ENCODE measurements at regions of chr1 and their contacts with region 1.

Region 1: GRCh38 chr1:243850452-243851256 is 611 bp upstream of the AKT3 start:
- DNase-seq: peak; percentile 92
- ATAC-seq: peak; percentile 50
- H3K4me3 Mint-ChIP-seq: peak overlapping the region; percentile 70
- H3K27ac Mint-ChIP-seq: peak overlapping the region; percentile 92
- H3K4me1 Mint-ChIP-seq: peaks cover 33% of the 10 kb centered on the region
- H3K27me3 Mint-ChIP-seq: peaks cover 2% of the 10 kb centered on the region

Region 2: GRCh38 chr1:243421784-243422183 is 428.9 kb before region 1 on chr1:
- CTCF ChIA-PET with region 1: no interaction called
- POLR2A ChIA-PET with region 1: no interaction called
- intact Hi-C with region 1: loop called in 1 of 2 experiments (anchors 2 kb)
- DNase-seq: peak; percentile 78
- ATAC-seq: peak; percentile 99
- H3K4me3 Mint-ChIP-seq: peak overlapping the region; percentile 34
- H3K27ac Mint-ChIP-seq: peak overlapping the region; percentile 38
- H3K4me1 Mint-ChIP-seq: peaks cover 26% of the 10 kb centered on the region
- H3K27me3 Mint-ChIP-seq: no peaks in the 10 kb centered on the region

Region 3: DNA sequence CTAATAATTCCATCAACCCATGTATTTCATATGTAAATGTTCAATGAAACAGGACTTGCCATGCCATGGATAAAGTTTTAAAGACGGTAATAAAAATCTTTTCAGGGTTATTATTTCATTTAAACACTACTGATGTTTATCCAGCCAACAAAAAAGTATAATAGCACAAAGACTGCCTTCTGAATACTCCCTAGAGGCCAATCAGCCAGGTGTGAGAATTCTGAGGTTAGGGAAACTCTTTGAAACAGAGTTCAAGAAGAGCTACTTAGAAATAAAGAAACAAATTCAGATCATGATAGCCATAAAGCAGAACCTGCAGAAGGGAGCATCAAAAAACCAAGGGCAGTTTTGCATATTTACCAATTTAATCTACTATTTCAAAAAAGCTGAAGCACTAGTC is 49.3 kb before region 1 on chr1:
- CTCF ChIA-PET with region 1: no interaction called
- POLR2A ChIA-PET with region 1: interaction called, 3 read pairs
- intact Hi-C with region 1: loop called (anchors 1 kb)
- DNase-seq: no peak
- ATAC-seq: no peak
- H3K4me3 Mint-ChIP-seq: no peak overlapping the region
- H3K27ac Mint-ChIP-seq: no peak overlapping the region
- H3K4me1 Mint-ChIP-seq: peaks cover 50% of the 10 kb centered on the region
- H3K27me3 Mint-ChIP-seq: no peaks in the 10 kb centered on the region

Region 4: DNA sequence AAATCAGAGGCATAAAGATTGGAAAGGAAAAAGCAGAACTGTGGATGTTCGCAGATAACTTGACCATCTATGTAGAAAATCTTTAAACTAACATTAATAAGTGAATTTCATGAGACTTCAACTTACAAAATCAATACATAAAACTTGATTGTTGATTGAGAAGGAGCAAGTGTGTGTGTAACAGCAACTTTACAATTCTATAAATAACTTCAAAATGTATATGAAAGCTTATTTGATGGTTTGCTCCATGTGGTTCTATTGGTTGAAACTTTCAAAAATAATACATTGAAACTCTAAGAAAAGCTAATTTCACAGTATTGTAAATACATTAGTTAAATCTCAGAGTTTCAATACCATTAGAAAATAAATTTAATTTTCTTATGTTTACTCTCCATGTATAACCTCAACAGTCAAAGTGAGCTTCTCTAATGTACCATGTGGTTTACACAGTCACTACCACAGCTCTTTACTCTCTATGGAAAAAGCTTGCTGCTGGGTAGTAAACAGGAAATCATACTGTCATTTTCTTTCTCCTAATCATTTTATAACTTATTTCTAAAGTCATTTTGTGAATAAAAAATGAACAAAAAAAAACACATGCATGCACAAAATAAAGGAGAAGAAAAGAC is 12.6 kb before region 1 on chr1:
- CTCF ChIA-PET with region 1: interaction called, 4 read pairs
- POLR2A ChIA-PET with region 1: interaction called, 7 read pairs
- intact Hi-C with region 1: loop called (anchors 1 kb)
- DNase-seq: no peak
- ATAC-seq: peak; percentile 94
- H3K4me3 Mint-ChIP-seq: no peak overlapping the region
- H3K27ac Mint-ChIP-seq: peak overlapping the region; percentile 60
- H3K4me1 Mint-ChIP-seq: peaks cover 39% of the 10 kb centered on the region
- H3K27me3 Mint-ChIP-seq: no peaks in the 10 kb centered on the region

Region 5: GRCh38 chr1:243950166-243950565 is 99.5 kb after region 1 on chr1:
- CTCF ChIA-PET with region 1: no interaction called
- POLR2A ChIA-PET with region 1: no interaction called
- intact Hi-C with region 1: no loop called
- DNase-seq: no peak
- ATAC-seq: no peak
- H3K4me3 Mint-ChIP-seq: no peak overlapping the region
- H3K27ac Mint-ChIP-seq: no peak overlapping the region
- H3K4me1 Mint-ChIP-seq: no peaks in the 10 kb centered on the region
- H3K27me3 Mint-ChIP-seq: no peaks in the 10 kb centered on the region

Region 6: DNA sequence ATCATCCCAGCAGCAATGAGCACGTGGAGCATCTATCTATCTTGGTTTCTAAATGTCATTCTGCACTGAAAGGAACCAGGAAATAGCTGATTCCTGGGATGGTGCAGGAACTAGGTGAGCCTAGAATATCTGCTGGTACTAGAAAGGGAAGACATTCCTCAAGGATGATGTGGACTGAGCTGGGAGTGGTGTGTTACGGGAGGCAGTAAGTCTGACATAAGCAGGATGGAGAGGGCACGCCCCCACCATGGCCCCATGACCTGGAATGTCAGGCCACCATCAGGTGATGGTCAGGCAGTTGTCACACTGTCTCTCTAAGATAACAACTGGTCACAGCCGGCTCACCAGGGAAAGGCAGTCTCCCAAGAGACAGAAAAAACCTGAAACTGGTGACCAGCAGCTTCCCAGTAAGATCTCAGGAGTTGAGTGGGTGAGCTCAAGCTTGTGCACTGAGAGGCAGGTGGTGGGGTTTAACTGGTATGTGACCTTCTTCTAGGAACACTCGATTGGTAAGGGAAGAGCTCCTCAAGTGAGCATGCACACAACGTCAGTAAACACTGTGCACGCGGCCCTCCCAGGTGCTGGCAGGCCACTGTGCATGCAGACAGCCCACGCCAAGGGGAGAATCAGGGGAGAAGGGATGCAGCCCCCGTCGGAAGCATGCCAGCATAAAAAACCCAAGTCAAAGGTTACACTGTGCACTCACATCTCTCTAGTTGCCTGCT is 452.4 kb after region 1 on chr1:
- CTCF ChIA-PET with region 1: no interaction called
- POLR2A ChIA-PET with region 1: no interaction called
- intact Hi-C with region 1: loop called in 1 of 2 experiments (anchors 1 kb)
- DNase-seq: no peak
- ATAC-seq: no peak
- H3K4me3 Mint-ChIP-seq: no peak overlapping the region
- H3K27ac Mint-ChIP-seq: no peak overlapping the region
- H3K4me1 Mint-ChIP-seq: peaks cover 11% of the 10 kb centered on the region
- H3K27me3 Mint-ChIP-seq: no peaks in the 10 kb centered on the region

Measured in activated CD4-positive, alpha-beta T cell treated with anti-CD3 and anti-CD28 coated beads for 36 hours (primary cell).